Endothelial cell of umbilical vein (primary cell): ENCODE measurements at regions of chr11 and their contacts with region 1.

Region 1: GRCh38 chr11:82906244-82906654 is 4.7 kb downstream of the DDIAS start:
- DNase-seq: peak; percentile 68
- H3K4me3 ChIP-seq: no peak overlapping the region
- H3K27ac ChIP-seq: no peak overlapping the region
- H3K4me1 ChIP-seq: peaks cover 20% of the 10 kb centered on the region
- H3K27me3 ChIP-seq: no peaks in the 10 kb centered on the region
- CTCF ChIP-seq: peak; percentile 12 to 25
- POLR2A ChIP-seq: no peak

Region 2: GRCh38 chr11:82969811-82970210 is 63.6 kb after region 1 on chr11:
- CTCF ChIA-PET with region 1: no interaction called
- POLR2A ChIA-PET with region 1: no interaction called
- dilution Hi-C with region 1: no loop called
- intact Hi-C with region 1: no loop called
- DNase-seq: no peak
- H3K4me3 ChIP-seq: no peak overlapping the region
- H3K27ac ChIP-seq: no peak overlapping the region
- H3K4me1 ChIP-seq: no peaks in the 10 kb centered on the region
- H3K27me3 ChIP-seq: no peaks in the 10 kb centered on the region
- CTCF ChIP-seq: no peak
- POLR2A ChIP-seq: no peak

Region 3: GRCh38 chr11:83007909-83008580 is 101.8 kb after region 1 on chr11:
- CTCF ChIA-PET with region 1: interaction called, 4 read pairs
- POLR2A ChIA-PET with region 1: interaction called, 13 read pairs
- dilution Hi-C with region 1: no loop called
- intact Hi-C with region 1: no loop called
- DNase-seq: peak; percentile 94
- H3K4me3 ChIP-seq: no peak overlapping the region
- H3K27ac ChIP-seq: peak overlapping the region; percentile 68
- H3K4me1 ChIP-seq: peaks cover 40% of the 10 kb centered on the region
- H3K27me3 ChIP-seq: no peaks in the 10 kb centered on the region
- CTCF ChIP-seq: peak in 1 of 2 donors; percentile 6
- POLR2A ChIP-seq: peak; percentile 51

Region 4: GRCh38 chr11:83087035-83087434 is 180.8 kb after region 1 on chr11:
- CTCF ChIA-PET with region 1: no interaction called
- POLR2A ChIA-PET with region 1: no interaction called
- dilution Hi-C with region 1: no loop called
- intact Hi-C with region 1: loop called (anchors 5 kb)
- DNase-seq: peak; percentile 28
- H3K4me3 ChIP-seq: no peak overlapping the region
- H3K27ac ChIP-seq: no peak overlapping the region
- H3K4me1 ChIP-seq: no peaks in the 10 kb centered on the region
- H3K27me3 ChIP-seq: no peaks in the 10 kb centered on the region
- CTCF ChIP-seq: no peak
- POLR2A ChIP-seq: no peak

Region 5: DNA sequence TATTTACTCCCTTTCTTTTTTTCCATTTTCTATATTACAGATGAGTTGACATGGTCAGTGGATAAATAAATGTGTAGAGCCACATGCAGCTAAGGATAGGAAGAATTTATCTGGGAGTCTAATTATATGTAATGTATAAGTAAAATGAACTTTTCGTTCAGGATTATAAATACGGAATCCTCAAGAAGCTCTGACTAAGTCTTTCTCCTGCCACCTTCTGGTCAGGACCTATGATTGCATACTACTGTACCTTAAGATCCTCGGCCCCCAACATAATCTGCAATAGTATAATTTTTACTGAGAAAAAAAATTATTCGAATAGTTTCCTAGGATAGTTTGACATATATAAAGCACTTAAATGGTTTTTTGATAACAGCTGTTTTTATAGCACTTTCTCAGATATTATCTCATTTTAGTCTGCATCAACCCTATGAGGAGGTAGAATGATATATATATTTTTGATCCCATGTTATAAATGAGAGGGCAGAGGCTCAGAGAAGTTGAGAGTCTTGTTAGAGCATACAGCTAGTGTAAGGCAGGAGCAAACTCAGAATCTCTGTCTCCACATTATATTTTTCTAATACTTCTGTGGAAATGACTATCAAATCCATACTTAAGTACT is 343.8 kb after region 1 on chr11:
- CTCF ChIA-PET with region 1: interaction called, 27 read pairs
- POLR2A ChIA-PET with region 1: no interaction called
- dilution Hi-C with region 1: no loop called
- intact Hi-C with region 1: loop called (anchors 1 kb)
- DNase-seq: peak; percentile 46
- H3K4me3 ChIP-seq: no peak overlapping the region
- H3K27ac ChIP-seq: no peak overlapping the region
- H3K4me1 ChIP-seq: no peaks in the 10 kb centered on the region
- H3K27me3 ChIP-seq: no peaks in the 10 kb centered on the region
- CTCF ChIP-seq: peak; percentile 35 to 53
- POLR2A ChIP-seq: no peak